ENCODE measurements at regions of chr13 and their contacts with region 1.

Region 1: GRCh38 chr13:75549262-75550158 is at the start of gene UCHL3:
- DNase-seq: peak; percentile 99
- H3K4me3 Mint-ChIP-seq: peak within 1 kb of the TSS; percentile 89
- H3K27ac Mint-ChIP-seq: peak within 1 kb of the TSS; percentile 97
- H3K4me1 Mint-ChIP-seq: peaks cover 25% of the 10 kb centered on the region
- H3K27me3 Mint-ChIP-seq: peaks cover 2% of the 10 kb centered on the region
- total RNA-seq, gene UCHL3: 43.5 and 50.6 TPM in 2 replicates

Region 2: DNA sequence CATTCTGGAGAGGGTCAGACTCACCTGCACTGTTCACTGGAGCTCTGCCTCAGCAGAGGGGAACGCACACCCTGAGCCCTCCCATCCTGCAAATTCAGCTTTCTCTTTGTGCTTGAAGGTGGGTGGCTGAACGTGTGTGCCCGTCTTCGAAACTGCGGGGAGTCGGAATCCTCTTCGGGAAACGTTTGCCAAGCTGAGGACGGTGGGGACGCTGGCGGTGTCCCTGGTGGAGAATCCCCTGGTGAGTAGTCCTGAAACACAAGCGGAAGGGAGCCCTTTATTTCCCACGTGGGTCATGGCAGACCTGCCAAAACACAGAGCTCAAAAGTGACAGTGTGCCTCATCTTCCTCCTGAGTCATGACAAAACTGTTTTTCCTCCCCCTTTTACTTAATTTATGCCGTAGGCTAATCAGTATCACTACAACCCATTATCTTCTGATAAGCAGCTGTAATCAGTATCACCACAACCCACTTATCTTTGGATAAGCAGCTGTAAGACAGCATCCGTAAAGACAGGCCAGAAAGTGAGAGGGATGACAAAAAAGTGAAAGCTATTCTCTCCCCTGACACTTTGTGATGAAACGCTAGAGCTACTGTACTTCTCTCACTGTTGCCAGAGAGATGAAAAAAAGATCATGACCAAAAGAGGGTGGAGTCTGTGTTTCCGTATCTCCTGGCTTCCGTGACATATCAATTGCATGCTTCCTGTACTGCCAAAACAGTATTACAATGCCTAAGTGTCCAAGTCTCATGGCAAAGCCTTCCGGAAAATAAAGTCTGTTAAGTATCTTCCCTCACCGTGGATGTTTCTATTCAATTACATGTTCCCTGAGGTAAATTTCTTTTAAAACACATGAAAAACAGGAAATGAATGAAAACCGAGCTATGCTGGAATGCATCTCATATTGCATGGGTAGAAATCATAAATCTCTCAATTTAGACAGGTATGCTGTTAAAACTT is 223.1 kb before region 1 on chr13:
- intact Hi-C with region 1: loop called (anchors 1 kb)
- DNase-seq: peak; percentile 87
- H3K4me3 Mint-ChIP-seq: peak overlapping the region; percentile 93
- H3K27ac Mint-ChIP-seq: peak overlapping the region; percentile 98
- H3K4me1 Mint-ChIP-seq: peaks cover 29% of the 10 kb centered on the region
- H3K27me3 Mint-ChIP-seq: no peaks in the 10 kb centered on the region

Region 3: GRCh38 chr13:75372517-75372916 is 177.0 kb before region 1 on chr13:
- intact Hi-C with region 1: loop called (anchors 1 kb)
- DNase-seq: peak; percentile 73
- H3K4me3 Mint-ChIP-seq: no peak overlapping the region
- H3K27ac Mint-ChIP-seq: no peak overlapping the region
- H3K4me1 Mint-ChIP-seq: peaks cover 11% of the 10 kb centered on the region
- H3K27me3 Mint-ChIP-seq: no peaks in the 10 kb centered on the region

Region 4: GRCh38 chr13:75482070-75482819 is 67.3 kb before region 1 on chr13 and contains the start of gene TBC1D4:
- intact Hi-C with region 1: loop called (anchors 1 kb)
- DNase-seq: peak; percentile 87
- H3K4me3 Mint-ChIP-seq: peak within 1 kb of the TSS; percentile 99
- H3K27ac Mint-ChIP-seq: peak within 1 kb of the TSS; percentile 86
- H3K4me1 Mint-ChIP-seq: peaks cover 36% of the 10 kb centered on the region
- H3K27me3 Mint-ChIP-seq: peaks cover 47% of the 10 kb centered on the region
- total RNA-seq, gene TBC1D4: 72.3 and 77.0 TPM in 2 replicates

Region 5: GRCh38 chr13:75530536-75530935 is 19.0 kb before region 1 on chr13:
- intact Hi-C with region 1: loop called (anchors 2 kb)
- DNase-seq: no peak
- H3K4me3 Mint-ChIP-seq: no peak overlapping the region
- H3K27ac Mint-ChIP-seq: peak overlapping the region; percentile 41
- H3K4me1 Mint-ChIP-seq: peaks cover 30% of the 10 kb centered on the region
- H3K27me3 Mint-ChIP-seq: no peaks in the 10 kb centered on the region

Region 6: DNA sequence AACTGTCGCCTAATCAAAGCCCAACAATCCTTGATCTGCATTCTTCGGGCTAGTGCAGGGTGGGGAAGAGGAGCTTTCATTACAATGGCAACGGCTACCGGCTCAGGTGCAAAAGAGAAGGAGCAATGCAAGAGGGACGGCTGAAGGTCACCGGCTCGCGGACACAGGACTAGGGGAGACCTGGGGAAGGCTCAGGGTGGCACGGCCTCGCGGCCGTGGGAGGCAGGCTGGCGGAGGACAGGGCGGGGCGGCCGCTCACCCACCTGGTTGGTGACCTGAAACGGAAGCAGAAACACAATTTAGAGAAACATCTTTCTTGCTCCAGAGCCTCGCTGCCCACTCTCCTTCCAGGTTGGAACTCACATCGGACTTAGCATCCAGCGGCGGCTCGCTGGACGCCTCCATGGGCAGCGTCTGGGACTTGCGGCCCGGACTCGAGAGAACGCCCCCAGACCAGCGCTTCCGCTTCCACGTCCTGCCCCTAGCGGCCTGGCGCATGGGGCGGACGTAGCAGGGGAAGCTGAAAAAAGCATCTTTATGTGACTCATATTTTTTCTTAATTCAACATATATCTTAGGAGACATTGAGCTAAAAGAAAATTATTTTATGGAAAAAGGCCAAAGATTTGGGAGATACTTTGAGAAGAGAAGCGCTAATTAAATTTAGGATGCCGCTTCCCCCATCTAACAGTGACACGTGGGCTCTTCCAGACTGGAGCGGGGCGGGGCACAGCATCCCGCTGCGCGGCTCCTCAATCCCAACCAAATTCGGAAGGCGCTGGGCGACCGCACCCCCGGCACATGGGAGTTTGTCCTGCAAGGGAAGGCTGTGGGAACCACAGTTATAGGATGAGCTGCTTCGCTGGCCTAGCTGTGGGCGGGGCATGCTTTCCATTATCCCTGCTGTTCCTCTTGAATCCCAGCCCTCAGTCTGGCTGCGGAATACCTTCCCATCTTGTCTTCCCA is 11.8 kb before region 1 on chr13 and contains the start of gene COMMD6:
- intact Hi-C with region 1: loop called (anchors 1 kb)
- DNase-seq: peak; percentile 92
- H3K4me3 Mint-ChIP-seq: peak within 1 kb of the TSS; percentile 94
- H3K27ac Mint-ChIP-seq: peak within 1 kb of the TSS; percentile 90
- H3K4me1 Mint-ChIP-seq: peaks cover 29% of the 10 kb centered on the region
- H3K27me3 Mint-ChIP-seq: no peaks in the 10 kb centered on the region
- total RNA-seq, gene COMMD6: 100 and 108 TPM in 2 replicates

Region 7: DNA sequence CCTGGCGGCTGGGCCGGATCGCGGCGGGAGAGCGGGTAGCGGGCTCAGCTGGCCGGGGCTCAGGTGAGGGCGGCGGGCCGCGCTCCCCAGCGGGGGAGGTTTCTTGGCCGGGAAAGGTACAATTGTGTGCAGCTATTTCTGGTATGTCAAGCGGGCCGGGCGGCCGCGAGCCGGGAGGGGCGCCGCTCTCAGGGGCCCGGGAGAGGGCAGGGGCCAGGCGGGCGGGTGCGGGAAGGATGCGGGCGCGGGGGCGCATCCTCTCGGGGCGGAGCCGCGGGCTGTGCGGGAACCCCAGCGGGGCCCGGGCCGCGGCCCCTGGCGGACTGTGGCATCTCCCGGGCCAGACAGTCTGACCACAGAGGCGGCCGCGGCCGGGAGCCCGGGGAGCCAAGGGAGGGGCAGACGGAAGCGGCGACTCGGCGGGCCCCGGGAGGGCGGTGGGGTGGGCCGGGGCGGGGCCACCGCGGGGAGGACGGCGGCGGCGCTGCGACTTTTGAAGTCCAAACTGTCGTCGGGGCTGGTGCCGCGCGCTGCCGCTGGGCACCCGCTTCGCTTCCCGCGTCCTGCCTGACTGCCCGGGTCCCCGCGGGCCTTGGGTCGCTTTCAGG is 86.4 kb after region 1 on chr13 and contains the start of gene LMO7:
- intact Hi-C with region 1: loop called (anchors 5 kb)
- DNase-seq: peak; percentile 84
- H3K4me3 Mint-ChIP-seq: peak within 1 kb of the TSS; percentile 79
- H3K27ac Mint-ChIP-seq: no peak within 1 kb of the TSS
- H3K4me1 Mint-ChIP-seq: peaks cover 14% of the 10 kb centered on the region
- H3K27me3 Mint-ChIP-seq: peaks cover 21% of the 10 kb centered on the region
- total RNA-seq, gene LMO7: 4.3 and 5.8 TPM in 2 replicates